ENCODE measurements at regions of chr11 and their contacts with region 1.

Region 1: DNA sequence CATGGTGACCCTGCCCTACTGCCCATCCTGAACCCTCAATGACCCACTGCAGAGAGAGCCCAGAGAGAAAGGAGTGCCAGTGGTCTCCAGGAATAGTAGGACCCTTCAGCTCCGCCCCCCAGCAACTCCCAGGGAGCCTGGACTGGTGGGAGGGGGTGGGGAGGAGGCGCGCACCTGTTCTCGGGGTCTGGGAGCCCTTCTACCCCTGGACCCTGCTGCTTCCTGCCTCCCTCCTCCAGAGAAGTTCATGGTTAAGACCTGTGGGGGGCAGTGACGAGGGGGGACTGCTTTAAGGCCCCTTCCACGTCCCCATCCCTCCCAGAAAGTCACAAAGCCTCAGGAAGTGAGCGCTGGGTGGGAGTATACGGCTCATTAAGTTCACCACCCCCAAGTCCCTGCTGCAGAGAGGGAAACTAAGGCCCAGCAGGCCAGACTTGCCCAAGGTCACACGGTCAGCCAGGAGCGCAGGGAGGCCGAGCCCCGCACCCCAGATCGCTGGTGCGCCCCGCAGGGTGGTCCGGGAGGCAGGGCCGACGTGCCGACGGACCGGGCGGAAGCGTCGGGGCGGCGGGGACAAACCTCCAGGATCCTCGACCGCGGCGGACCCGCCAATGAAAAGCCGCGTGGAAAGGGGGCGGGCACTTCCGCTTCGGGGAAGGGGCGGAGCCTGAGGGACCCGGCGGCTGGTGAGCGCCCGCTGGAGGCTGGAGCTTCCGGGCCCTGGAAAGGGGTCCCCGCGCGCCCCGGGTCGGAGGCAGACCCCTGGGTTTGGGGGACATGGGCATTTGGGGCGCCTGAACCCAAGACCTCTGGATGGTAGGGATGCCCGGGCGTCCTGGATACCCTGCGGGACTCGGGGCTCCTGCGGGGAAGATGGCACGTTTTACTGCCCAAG is at the starts of genes NUDT22 and TRPT1:
- DNase-seq: peak; percentile 93 to 96 (median 95)
- ATAC-seq: peak; percentile 74 to 85 (median 80)
- H3K4me3 ChIP-seq: peak within 1 kb of the TSS; percentile 56 to 94 (median 83)
- H3K27ac ChIP-seq: peak within 1 kb of the TSS; percentile 82 to 98 (median 96)
- H3K4me1 ChIP-seq: peaks cover 3 to 58% (median 37%) of the 10 kb centered on the region in 12 donors
- H3K27me3 ChIP-seq: no peaks in the 10 kb centered on the region
- CTCF ChIP-seq: peak in 7 of 12 donors; percentile 3 to 39 (median 15)
- POLR2A ChIP-seq: peak; percentile 84 to 96
- total RNA-seq, gene NUDT22: 63.7 to 93.0 (median 70.3) TPM
- total RNA-seq, gene TRPT1: 51.2 to 146 (median 63.3) TPM

Region 2: GRCh38 chr11:64185816-64186498 is 39.9 kb before region 1 on chr11 and contains the start of gene STIP1:
- intact Hi-C with region 1: loop called in 4 of 10 experiments (anchors 1 to 5 kb)
- DNase-seq: peak; percentile 98 to 100 (median 99)
- ATAC-seq: peak; percentile 87 to 95 (median 92)
- H3K4me3 ChIP-seq: peak within 1 kb of the TSS in 11 of 12 donors; percentile 41 to 83 (median 76)
- H3K27ac ChIP-seq: peak within 1 kb of the TSS; percentile 91 to 99 (median 97)
- H3K4me1 ChIP-seq: peaks cover 0 to 49% (median 36%) of the 10 kb centered on the region in 12 donors
- H3K27me3 ChIP-seq: no peaks in the 10 kb centered on the region
- CTCF ChIP-seq: peak in 8 of 12 donors; percentile 20 to 70 (median 40)
- POLR2A ChIP-seq: no peak
- total RNA-seq, gene STIP1: 74.9 to 143 (median 88.8) TPM